ENCODE measurements at regions of chr18 and their contacts with region 1.

Region 1: DNA sequence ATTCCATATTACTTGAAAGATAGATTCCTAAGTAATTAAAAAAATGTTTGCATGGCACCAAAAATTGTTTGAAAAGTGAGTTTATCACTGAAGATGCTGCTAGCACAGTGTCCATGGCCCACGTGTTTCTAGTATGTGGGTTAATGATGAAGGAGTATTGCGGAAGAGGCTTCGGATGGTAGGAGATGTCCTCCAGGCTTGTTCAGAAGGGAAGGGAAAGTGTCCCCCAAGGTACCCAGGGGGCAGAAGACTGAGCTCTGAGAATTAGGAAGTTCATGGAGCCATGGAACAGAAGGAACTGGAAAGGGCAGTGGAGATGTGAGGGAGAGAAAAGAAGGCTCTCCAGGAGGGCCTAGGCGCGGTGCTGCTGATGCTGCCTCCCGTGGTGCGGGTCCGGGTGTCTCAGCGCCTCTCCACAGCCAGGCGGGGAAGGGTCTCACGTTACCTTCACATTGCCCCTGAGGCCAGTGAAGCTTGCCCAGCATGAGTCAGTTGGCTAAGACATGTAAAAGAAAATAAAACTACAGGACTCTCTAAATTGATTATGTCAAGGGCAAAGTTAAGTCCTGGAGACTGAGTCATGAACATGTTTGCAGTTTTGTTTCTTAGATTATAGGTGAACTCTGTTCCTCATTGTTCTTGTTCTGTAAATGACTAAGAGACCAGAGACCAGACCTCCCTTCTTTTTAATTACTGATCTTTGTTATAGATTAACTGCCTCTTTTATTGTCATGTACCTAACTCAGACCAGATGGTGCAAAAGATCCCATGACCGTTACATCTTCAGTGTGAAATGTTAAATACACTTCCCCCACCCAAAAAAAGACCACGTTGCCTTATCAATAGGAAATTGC is 89.0 kb downstream of the MTCL1 start:
- DNase-seq: no peak
- ATAC-seq: no peak

Region 2: DNA sequence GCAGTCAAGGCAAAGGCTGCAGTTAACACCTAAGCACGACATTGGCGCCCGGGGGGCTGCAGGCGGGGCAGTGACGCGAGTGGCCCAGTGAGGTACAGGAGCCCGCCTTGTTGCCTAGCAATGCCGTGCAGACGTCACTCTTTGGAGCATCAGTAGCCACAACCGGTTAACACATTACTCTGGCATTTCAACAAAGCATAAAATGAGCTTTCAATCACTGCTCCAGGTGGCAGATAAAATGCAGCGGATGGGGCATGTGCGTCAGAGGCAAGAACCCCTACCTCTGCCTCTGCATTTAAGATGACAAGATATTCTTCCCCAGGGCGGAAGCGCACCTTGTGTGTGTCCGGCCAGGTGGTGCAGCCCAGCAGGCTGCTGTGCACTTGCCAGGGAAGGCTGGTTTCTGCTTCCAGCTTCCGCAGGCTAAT is 50.4 kb after region 1 on chr18:
- intact Hi-C with region 1: loop called (anchors 10 kb)
- DNase-seq: no peak
- ATAC-seq: no peak